ENCODE measurements at regions of chr6 and their contacts with region 1.

Region 1: DNA sequence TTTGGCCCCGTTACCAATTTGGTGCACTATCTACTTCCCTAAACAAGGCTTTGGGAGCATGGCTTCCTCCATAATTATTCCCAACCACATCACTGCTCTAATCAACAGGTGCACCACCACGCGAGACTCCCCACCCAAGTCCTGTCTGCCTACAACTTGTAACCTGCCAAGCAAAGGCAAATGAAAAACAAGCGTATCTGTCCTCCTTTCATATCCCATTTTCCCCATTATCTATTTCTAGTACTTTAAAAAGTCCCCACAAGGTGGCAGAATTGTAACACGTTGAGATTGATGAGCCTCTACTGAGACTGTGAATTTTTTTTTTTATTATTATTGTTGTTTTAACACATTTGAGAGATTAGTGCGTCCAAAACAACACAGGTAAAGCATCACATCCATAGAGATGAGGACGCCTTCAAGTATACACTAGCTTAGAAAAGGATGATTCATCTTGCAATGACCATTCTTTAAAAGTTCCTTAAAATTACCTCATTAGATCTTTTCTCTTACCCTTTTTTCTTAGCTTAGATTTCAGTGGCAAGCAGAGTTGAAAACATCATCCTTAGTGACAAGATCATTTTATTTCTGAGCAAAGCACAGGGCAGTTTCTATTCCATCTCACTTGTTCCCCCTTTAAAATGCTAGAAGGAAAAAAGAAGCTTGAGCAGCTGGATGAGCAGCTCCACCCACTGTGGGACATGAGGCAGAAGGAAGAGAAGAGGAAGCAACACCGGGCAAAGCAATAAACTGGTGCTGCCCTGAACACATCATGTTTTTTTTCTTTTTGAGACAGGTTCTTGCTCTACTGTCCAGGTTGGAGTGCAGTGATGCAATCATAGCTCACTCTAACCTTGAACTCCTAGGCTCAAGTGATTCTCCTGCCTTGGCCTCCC is 210.8 kb downstream of the ARHGAP18 start:
- DNase-seq: peak; percentile 84
- H3K4me3 ChIP-seq: peak overlapping the region; percentile 11
- H3K27ac ChIP-seq: no peak overlapping the region
- H3K4me1 ChIP-seq: peaks cover 36% of the 10 kb centered on the region
- H3K27me3 ChIP-seq: no peaks in the 10 kb centered on the region
- CTCF ChIP-seq: peak; percentile 71

Region 2: DNA sequence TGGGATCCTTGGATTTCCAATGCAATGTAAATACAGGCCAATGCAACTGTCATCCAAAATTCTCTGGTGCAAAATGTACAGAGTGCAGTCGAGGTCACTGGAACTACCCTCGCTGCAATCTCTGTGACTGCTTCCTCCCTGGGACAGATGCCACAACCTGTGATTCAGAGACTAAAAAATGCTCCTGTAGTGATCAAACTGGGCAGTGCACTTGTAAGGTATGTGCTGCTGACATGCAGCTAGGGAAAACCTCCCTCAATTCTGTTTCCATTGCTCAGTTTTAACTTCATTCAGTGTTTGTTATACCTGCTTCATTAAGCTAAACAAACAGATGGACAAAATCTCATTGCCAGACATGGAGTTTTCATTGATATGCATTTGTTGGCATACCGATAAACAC is 186.3 kb before region 1 on chr6:
- CTCF ChIA-PET with region 1: no interaction called
- POLR2A ChIA-PET with region 1: no interaction called
- intact Hi-C with region 1: no loop called
- DNase-seq: no peak
- H3K4me3 ChIP-seq: no peak overlapping the region
- H3K27ac ChIP-seq: no peak overlapping the region
- H3K4me1 ChIP-seq: peaks cover 5% of the 10 kb centered on the region
- H3K27me3 ChIP-seq: no peaks in the 10 kb centered on the region
- CTCF ChIP-seq: no peak

Region 3: DNA sequence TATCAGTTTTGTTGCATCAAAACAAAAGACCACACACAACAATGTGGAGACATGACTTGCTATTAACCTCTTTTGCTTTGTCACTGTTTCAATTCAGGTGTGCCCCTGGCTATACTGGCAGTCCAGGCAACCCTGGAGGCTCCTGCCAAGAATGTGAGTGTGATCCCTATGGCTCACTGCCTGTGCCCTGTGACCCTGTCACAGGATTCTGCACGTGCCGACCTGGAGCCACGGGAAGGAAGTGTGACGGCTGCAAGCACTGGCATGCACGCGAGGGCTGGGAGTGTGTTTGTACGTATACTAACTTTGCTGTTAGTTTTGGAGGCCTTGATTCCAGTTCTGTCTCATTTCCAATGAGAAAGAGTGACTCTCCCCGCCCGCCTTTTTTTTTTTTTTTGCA is 146.1 kb before region 1 on chr6:
- CTCF ChIA-PET with region 1: no interaction called
- POLR2A ChIA-PET with region 1: no interaction called
- intact Hi-C with region 1: no loop called
- DNase-seq: no peak
- H3K4me3 ChIP-seq: no peak overlapping the region
- H3K27ac ChIP-seq: no peak overlapping the region
- H3K4me1 ChIP-seq: no peaks in the 10 kb centered on the region
- H3K27me3 ChIP-seq: no peaks in the 10 kb centered on the region
- CTCF ChIP-seq: no peak

Region 4: GRCh38 chr6:129517291-129517690 is 18.1 kb after region 1 on chr6:
- CTCF ChIA-PET with region 1: interaction called, 15 read pairs
- POLR2A ChIA-PET with region 1: no interaction called
- intact Hi-C with region 1: no loop called
- DNase-seq: peak; percentile 80
- H3K4me3 ChIP-seq: no peak overlapping the region
- H3K27ac ChIP-seq: no peak overlapping the region
- H3K4me1 ChIP-seq: peaks cover 12% of the 10 kb centered on the region
- H3K27me3 ChIP-seq: no peaks in the 10 kb centered on the region
- CTCF ChIP-seq: 0 out of 2 replicates have a peak, but pooled peaks have one; percentile 11

Region 5: DNA sequence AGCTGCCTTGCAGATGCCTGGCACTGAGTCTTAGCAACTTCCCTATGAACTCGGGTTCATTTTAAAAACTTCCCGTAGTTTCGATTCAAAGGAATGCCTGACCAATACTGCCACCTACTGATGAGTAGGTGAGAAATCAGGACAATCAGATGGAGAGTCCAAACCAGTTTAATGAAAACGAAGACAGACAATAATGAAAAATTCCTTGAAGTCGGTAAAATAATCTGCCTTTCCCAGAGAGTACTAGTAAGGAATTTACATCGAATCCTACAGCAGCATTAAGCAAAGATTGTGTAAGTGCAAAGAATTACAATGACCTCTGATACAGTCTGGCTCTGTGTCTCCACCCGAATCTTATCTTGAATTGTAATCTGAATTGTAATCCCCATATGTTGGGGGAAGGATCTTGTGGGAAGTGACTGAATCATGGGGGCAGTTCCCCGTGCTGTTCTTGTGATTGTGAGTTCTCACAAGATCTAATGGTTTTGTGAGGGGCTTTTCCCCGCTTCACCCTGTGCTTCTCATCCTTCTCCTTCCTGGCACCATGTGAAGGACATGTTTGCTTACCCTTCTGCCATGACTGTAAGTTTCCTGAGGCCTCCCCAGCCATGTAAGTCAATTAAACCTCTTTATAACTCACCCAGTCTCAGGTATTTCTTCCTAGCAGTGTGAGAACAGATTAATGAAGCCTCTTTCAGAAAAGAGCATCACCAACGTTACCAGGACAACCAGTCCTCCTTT is 76.4 kb after region 1 on chr6:
- CTCF ChIA-PET with region 1: interaction called, 9 read pairs
- POLR2A ChIA-PET with region 1: no interaction called
- intact Hi-C with region 1: loop called (anchors 1 kb)
- DNase-seq: peak; percentile 78
- H3K4me3 ChIP-seq: no peak overlapping the region
- H3K27ac ChIP-seq: no peak overlapping the region
- H3K4me1 ChIP-seq: peaks cover 34% of the 10 kb centered on the region
- H3K27me3 ChIP-seq: no peaks in the 10 kb centered on the region
- CTCF ChIP-seq: peak; percentile 83

Region 6: GRCh38 chr6:129893640-129894039 is 394.4 kb after region 1 on chr6:
- CTCF ChIA-PET with region 1: no interaction called
- POLR2A ChIA-PET with region 1: no interaction called
- intact Hi-C with region 1: loop called (anchors 10 kb)
- DNase-seq: peak; percentile 70
- H3K4me3 ChIP-seq: no peak overlapping the region
- H3K27ac ChIP-seq: peak overlapping the region; percentile 48
- H3K4me1 ChIP-seq: peaks cover 47% of the 10 kb centered on the region
- H3K27me3 ChIP-seq: no peaks in the 10 kb centered on the region
- CTCF ChIP-seq: peak; percentile 71

Region 7: GRCh38 chr6:130020907-130021629 is 521.9 kb after region 1 on chr6:
- CTCF ChIA-PET with region 1: no interaction called
- POLR2A ChIA-PET with region 1: no interaction called
- intact Hi-C with region 1: loop called (anchors 5 kb)
- DNase-seq: peak; percentile 93
- H3K4me3 ChIP-seq: peak overlapping the region; percentile 72
- H3K27ac ChIP-seq: peak overlapping the region; percentile 71
- H3K4me1 ChIP-seq: peaks cover 13% of the 10 kb centered on the region
- H3K27me3 ChIP-seq: no peaks in the 10 kb centered on the region
- CTCF ChIP-seq: peak; percentile 89